B cell (primary cell): ENCODE measurements at regions of chr20 and their contacts with region 1.

Region 1: GRCh38 chr20:5448449-5449118 is 131.8 kb upstream of the PROKR2 start:
- DNase-seq: peak; percentile 56
- ATAC-seq: peak; percentile 47
- H3K4me3 ChIP-seq: no peak overlapping the region
- H3K4me3 Mint-ChIP-seq: no peak overlapping the region
- H3K27ac ChIP-seq: no peak overlapping the region
- H3K27ac Mint-ChIP-seq: no peak overlapping the region
- H3K4me1 ChIP-seq: no peaks in the 10 kb centered on the region
- H3K4me1 Mint-ChIP-seq: no peaks in the 10 kb centered on the region
- H3K27me3 ChIP-seq: peaks cover 0 to 12% (median 4%) of the 10 kb centered on the region in 4 experiments
- H3K27me3 Mint-ChIP-seq: peaks cover 44% of the 10 kb centered on the region
- CTCF ChIP-seq: peak; percentile 84

Region 2: DNA sequence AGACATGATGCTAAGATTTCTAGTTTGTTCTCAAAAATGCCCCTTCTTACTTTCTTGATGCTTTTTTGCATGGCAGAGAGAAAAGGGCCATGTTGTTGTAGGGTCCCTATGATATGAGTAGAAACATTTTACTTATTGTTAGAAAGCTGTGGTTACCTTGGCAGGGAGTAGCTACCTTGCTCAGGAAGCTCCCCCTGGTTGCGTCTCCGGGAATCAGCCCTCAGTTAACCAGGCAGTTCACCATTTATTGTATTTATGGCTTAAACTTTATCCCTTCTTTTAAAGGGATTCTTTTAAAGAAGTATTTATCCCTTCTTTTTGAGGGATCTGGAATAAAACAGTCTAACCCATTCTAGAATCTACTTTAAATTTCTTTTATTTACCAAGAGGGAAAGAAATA is 17.9 kb before region 1 on chr20:
- CTCF ChIA-PET with region 1: interaction called, 16 read pairs
- POLR2A ChIA-PET with region 1: no interaction called
- intact Hi-C with region 1: no loop called
- DNase-seq: no peak
- ATAC-seq: no peak
- H3K4me3 ChIP-seq: no peak overlapping the region
- H3K4me3 Mint-ChIP-seq: no peak overlapping the region
- H3K27ac ChIP-seq: no peak overlapping the region
- H3K27ac Mint-ChIP-seq: no peak overlapping the region
- H3K4me1 ChIP-seq: no peaks in the 10 kb centered on the region
- H3K4me1 Mint-ChIP-seq: no peaks in the 10 kb centered on the region
- H3K27me3 ChIP-seq: no peaks in the 10 kb centered on the region
- H3K27me3 Mint-ChIP-seq: peaks cover 31% of the 10 kb centered on the region
- CTCF ChIP-seq: no peak

Region 3: GRCh38 chr20:5463007-5463686 is 14.6 kb after region 1 on chr20:
- CTCF ChIA-PET with region 1: interaction called, 12 read pairs
- POLR2A ChIA-PET with region 1: no interaction called
- intact Hi-C with region 1: no loop called
- DNase-seq: no peak
- ATAC-seq: no peak
- H3K4me3 ChIP-seq: no peak overlapping the region
- H3K4me3 Mint-ChIP-seq: no peak overlapping the region
- H3K27ac ChIP-seq: no peak overlapping the region
- H3K27ac Mint-ChIP-seq: no peak overlapping the region
- H3K4me1 ChIP-seq: no peaks in the 10 kb centered on the region
- H3K4me1 Mint-ChIP-seq: no peaks in the 10 kb centered on the region
- H3K27me3 ChIP-seq: peaks cover 0 to 28% (median 0%) of the 10 kb centered on the region in 4 experiments
- H3K27me3 Mint-ChIP-seq: peaks cover 49% of the 10 kb centered on the region
- CTCF ChIP-seq: no peak